Ascending aorta (tissue), 2 donors: ENCODE measurements at regions of chr1 and their contacts with region 1.

Region 1: DNA sequence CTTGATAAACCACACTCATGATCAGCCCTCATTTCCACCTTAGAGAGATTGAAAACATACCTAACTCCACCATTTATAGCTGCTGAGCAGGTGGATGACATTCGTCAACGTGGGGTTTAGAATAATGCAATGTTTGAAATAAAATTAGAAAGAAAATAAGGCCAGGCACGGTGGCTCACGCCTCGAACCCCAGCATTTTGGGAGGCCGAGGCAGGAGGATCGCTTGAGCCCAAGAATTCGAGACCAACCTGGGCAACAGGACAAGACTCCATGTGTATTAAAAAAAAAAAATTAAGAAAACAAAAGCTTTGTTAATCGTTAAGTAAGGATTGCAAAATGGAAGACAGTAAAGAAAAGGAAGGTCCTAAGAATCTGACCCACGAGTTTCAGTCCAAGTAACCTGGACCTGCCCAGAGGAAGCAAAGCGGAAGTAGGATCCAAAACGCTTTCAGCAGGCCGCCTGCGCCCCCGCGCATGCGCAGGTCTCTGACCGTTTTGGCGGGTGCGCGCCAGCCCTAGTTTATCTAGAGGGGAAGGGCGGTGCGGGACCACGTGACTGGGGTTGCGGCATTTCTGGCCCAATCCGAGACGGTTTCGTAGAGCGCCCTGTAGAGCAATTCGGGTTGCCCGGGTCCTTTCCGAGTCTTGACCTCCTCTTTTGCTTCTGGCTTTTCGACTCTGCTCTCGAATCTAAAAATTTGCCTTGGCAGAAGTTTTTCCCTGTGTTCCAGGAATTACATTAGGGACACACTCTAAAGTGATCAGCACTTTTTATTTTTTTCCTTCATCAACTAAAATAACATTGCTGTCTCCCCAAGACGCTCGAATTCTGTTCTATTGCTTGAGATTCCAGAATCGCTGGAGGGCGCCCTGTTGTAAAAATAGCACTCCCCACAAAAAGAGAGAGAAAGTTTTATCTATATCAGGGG is 22.5 kb downstream of the ANP32E start:
- DNase-seq: peak; percentile 81 to 97
- H3K4me3 ChIP-seq: peak overlapping the region; percentile 55 to 59
- H3K27ac ChIP-seq: peak overlapping the region; percentile 78 to 79
- H3K4me1 ChIP-seq: peaks cover 0 to 3% of the 10 kb centered on the region in 2 donors
- H3K27me3 ChIP-seq: no peaks in the 10 kb centered on the region
- CTCF ChIP-seq: peak; percentile 26 to 47 (median 41)

Region 2: GRCh38 chr1:150192012-150192411 is 21.4 kb before region 1 on chr1:
- intact Hi-C with region 1: loop called (anchors 1 kb)
- DNase-seq: peak in 1 of 2 donors; percentile 60
- H3K4me3 ChIP-seq: no peak overlapping the region
- H3K27ac ChIP-seq: peak overlapping the region; percentile 53 to 57
- H3K4me1 ChIP-seq: peaks cover 0 to 14% of the 10 kb centered on the region in 2 donors
- H3K27me3 ChIP-seq: no peaks in the 10 kb centered on the region
- CTCF ChIP-seq: no peak

Region 3: DNA sequence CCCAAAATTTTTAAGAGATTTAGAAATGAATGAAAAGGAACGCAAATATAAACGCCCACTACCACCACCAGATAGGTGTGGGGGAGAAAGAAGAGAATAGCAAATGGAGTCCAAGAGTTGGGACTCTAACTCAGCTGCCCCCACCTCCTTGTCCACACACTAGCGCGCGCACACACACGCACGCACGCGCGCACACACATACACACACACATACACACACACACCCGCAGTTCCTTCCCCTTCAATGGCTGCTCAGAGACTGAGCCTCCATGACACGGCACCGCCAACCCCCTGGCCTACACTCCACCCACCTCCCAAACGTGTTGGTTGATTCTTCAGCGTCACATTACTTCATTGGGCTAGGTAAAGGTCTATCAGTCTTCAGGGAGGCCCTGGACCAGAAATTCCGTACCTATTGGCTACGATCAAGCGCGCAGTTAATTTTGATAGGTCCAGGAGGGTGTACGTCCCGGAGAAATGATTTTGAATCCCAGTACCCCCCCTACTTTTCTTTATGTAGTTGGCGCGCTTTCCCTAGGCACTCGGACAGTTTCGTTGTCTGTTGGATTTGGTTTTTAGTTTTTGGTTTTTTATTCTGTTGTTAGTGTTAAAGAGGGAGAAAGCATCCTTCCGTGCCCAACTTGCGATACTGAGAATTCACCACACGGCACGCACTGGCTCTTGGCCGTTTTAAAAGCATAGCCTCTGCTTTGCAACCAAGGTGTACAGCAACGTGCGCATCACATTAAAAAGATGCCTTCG is 22.6 kb after region 1 on chr1 and contains the start of gene ANP32E:
- intact Hi-C with region 1: loop called (anchors 1 kb)
- DNase-seq: peak; percentile 93 to 98
- H3K4me3 ChIP-seq: peak within 1 kb of the TSS; percentile 84 to 100
- H3K27ac ChIP-seq: peak within 1 kb of the TSS; percentile 97 to 100
- H3K4me1 ChIP-seq: peaks cover 0 to 10% of the 10 kb centered on the region in 2 donors
- H3K27me3 ChIP-seq: no peaks in the 10 kb centered on the region
- CTCF ChIP-seq: peak in 2 of 3 experiments; percentile 16 to 43
- total RNA-seq, gene ANP32E: 8.9 TPM

Region 4: GRCh38 chr1:150281221-150281836 is 67.9 kb after region 1 on chr1:
- intact Hi-C with region 1: no loop called
- DNase-seq: peak in 1 of 2 donors; percentile 85
- H3K4me3 ChIP-seq: peak overlapping the region; percentile 67 to 85
- H3K27ac ChIP-seq: peak overlapping the region; percentile 79 to 92
- H3K4me1 ChIP-seq: peaks cover 0 to 18% of the 10 kb centered on the region in 2 donors
- H3K27me3 ChIP-seq: no peaks in the 10 kb centered on the region
- CTCF ChIP-seq: peak; percentile 81 to 85 (median 84)